H1 (cell line): ENCODE measurements at regions of chr7 and their contacts with region 1.

Region 1: GRCh38 chr7:86814661-86815379 is 171.1 kb downstream of the GRM3 start:
- DNase-seq: peak in 1 of 2 experiments; percentile 9
- H3K4me3 ChIP-seq: no peak overlapping the region
- H3K27ac ChIP-seq: no peak overlapping the region
- H3K4me1 ChIP-seq: no peaks in the 10 kb centered on the region
- H3K27me3 ChIP-seq: peaks cover 0 to 2% (median 0%) of the 10 kb centered on the region in 4 experiments; a peak in 1 of 7 replicates
- CTCF ChIP-seq: peak in 2 of 3 experiments; percentile 69 to 72; a peak in 3 of 4 replicates
- EP300 ChIP-seq: no peak
- POLR2A ChIP-seq: no peak
- RAD21 ChIP-seq: peak; percentile 86 to 87

Region 2: GRCh38 chr7:86598311-86598710 is 216.5 kb before region 1 on chr7:
- CTCF ChIA-PET with region 1: interaction called, 87 read pairs
- POLR2A ChIA-PET with region 1: no interaction called
- DNase-seq: peak; percentile 56 to 88
- H3K4me3 ChIP-seq: no peak overlapping the region
- H3K27ac ChIP-seq: no peak overlapping the region
- H3K4me1 ChIP-seq: no peaks in the 10 kb centered on the region
- H3K27me3 ChIP-seq: no peaks in the 10 kb centered on the region
- CTCF ChIP-seq: peak; percentile 61 to 80 (median 79)
- EP300 ChIP-seq: no peak
- POLR2A ChIP-seq: no peak
- RAD21 ChIP-seq: peak; percentile 69

Region 3: GRCh38 chr7:86667732-86668131 is 147.1 kb before region 1 on chr7:
- CTCF ChIA-PET with region 1: interaction called, 100 read pairs
- POLR2A ChIA-PET with region 1: no interaction called
- DNase-seq: no peak
- H3K4me3 ChIP-seq: no peak overlapping the region
- H3K27ac ChIP-seq: no peak overlapping the region
- H3K4me1 ChIP-seq: peaks cover 0 to 14% (median 1%) of the 10 kb centered on the region in 4 experiments; a peak in 5 of 7 replicates
- H3K27me3 ChIP-seq: no peaks in the 10 kb centered on the region
- CTCF ChIP-seq: peak in 2 of 3 experiments; percentile 59 to 64; a peak in 3 of 4 replicates
- EP300 ChIP-seq: no peak
- POLR2A ChIP-seq: no peak
- RAD21 ChIP-seq: peak; percentile 77 to 85

Region 4: DNA sequence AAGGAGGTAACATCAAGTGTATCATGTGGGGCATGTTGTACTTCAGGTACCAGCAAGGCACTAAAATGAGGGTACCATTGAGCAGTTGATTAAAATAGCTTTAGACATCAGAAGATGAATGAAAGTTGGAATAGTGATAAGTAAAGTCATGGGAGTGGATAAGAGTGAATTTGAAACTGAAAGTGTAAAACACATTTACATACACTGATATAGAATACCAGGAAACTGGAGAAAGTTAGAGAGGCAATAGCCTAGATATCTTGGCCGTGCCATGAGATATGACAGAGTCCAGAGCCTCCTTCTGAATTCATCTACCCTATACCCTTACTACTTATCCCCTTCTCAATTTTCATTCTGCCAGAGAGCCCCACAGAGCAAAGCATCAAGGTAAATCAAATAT is 94.5 kb before region 1 on chr7:
- CTCF ChIA-PET with region 1: no interaction called
- POLR2A ChIA-PET with region 1: no interaction called
- DNase-seq: no peak
- H3K4me3 ChIP-seq: no peak overlapping the region
- H3K27ac ChIP-seq: no peak overlapping the region
- H3K4me1 ChIP-seq: no peaks in the 10 kb centered on the region
- H3K27me3 ChIP-seq: no peaks in the 10 kb centered on the region
- CTCF ChIP-seq: no peak
- EP300 ChIP-seq: no peak
- POLR2A ChIP-seq: no peak
- RAD21 ChIP-seq: no peak

Region 5: GRCh38 chr7:86833360-86833759 is 18.5 kb after region 1 on chr7:
- CTCF ChIA-PET with region 1: interaction called, 16 read pairs
- POLR2A ChIA-PET with region 1: no interaction called
- DNase-seq: no peak
- H3K4me3 ChIP-seq: no peak overlapping the region
- H3K27ac ChIP-seq: no peak overlapping the region
- H3K4me1 ChIP-seq: no peaks in the 10 kb centered on the region
- H3K27me3 ChIP-seq: no peaks in the 10 kb centered on the region
- CTCF ChIP-seq: no peak
- EP300 ChIP-seq: no peak
- POLR2A ChIP-seq: no peak
- RAD21 ChIP-seq: no peak

Region 6: DNA sequence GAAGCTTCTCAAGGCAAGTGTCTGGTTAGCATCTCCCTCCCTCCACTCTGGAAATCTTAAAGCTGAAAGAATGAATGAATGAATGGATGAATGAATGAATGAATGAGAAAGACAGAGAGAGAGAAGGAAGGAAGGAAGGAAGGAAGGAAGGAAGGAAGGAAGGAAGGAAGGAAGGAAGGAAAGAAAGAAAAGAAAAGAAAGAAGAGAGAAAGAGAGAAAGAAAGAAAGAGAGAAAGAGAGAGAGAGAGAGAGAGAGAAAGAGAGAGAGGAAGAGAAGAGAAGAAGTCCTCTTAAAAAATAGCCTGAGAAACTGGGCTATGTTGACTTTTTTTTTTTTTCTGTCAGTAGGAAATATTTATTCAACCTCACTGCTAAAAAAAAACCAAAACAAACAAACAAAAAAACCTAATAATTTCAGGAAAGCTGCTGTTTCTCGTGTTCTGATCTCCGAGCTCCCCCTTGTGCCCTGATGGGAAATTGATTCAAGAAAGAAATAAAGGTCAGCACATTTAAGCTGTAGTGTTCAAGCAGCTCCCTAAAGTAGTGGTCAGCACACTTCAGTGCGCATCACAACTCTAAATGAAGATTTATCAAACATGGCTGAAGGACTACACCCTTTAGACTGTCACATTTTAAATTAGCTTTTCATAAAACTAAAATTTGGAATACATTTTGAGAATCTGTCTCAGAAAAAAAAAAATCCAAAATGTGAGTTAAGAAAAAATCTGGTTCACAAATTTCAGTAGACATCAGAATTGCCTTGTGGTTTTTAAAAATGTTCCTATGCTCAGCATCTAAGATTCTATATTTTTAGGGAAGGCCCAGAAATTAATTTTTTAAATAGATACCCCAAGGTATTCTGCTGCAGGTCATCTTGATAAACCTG is 90.4 kb after region 1 on chr7:
- CTCF ChIA-PET with region 1: interaction called, 15 read pairs
- POLR2A ChIA-PET with region 1: no interaction called
- DNase-seq: no peak
- H3K4me3 ChIP-seq: no peak overlapping the region
- H3K27ac ChIP-seq: no peak overlapping the region
- H3K4me1 ChIP-seq: no peaks in the 10 kb centered on the region
- H3K27me3 ChIP-seq: no peaks in the 10 kb centered on the region
- CTCF ChIP-seq: peak in 2 of 3 experiments; percentile 57 to 71; a peak in 3 of 4 replicates
- EP300 ChIP-seq: no peak
- POLR2A ChIP-seq: no peak
- RAD21 ChIP-seq: peak; percentile 83 to 89